Ascending aorta (tissue), 2 donors: ENCODE measurements at regions of chr6 and their contacts with region 1.

Region 1: GRCh38 chr6:33417903-33418689 is at the start of gene CUTA:
- DNase-seq: peak; percentile 99 to 100
- H3K4me3 ChIP-seq: peak within 1 kb of the TSS; percentile 82 to 85
- H3K27ac ChIP-seq: peak within 1 kb of the TSS; percentile 95
- H3K4me1 ChIP-seq: peaks cover 13 to 30% of the 10 kb centered on the region in 2 donors
- H3K27me3 ChIP-seq: no peaks in the 10 kb centered on the region
- CTCF ChIP-seq: peak in 2 of 3 experiments; percentile 22 to 32
- total RNA-seq, gene CUTA: 77.2 TPM

Region 2: DNA sequence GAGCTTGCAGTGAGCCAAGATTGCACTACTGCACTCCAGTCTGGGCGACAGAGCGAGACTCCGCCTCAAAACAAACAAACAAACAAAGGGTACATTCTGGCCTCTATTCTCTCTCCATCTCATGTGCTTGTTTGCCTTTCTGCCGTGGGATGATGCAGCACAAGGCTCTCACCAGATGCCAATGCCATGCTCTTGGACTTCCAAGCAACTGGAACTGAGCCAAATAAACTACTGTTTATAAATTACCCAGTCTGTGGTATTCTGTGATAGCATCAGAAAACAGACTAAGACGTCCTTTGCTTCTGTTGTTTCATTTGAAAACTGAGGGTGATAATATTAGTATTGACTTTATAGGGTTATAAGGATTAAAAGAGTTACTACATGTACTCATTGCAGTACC is 453.3 kb before region 1 on chr6:
- intact Hi-C with region 1: no loop called
- DNase-seq: no peak
- H3K4me3 ChIP-seq: no peak overlapping the region
- H3K27ac ChIP-seq: no peak overlapping the region
- H3K4me1 ChIP-seq: peaks cover 0 to 12% of the 10 kb centered on the region in 2 donors
- H3K27me3 ChIP-seq: no peaks in the 10 kb centered on the region
- CTCF ChIP-seq: no peak

Region 3: DNA sequence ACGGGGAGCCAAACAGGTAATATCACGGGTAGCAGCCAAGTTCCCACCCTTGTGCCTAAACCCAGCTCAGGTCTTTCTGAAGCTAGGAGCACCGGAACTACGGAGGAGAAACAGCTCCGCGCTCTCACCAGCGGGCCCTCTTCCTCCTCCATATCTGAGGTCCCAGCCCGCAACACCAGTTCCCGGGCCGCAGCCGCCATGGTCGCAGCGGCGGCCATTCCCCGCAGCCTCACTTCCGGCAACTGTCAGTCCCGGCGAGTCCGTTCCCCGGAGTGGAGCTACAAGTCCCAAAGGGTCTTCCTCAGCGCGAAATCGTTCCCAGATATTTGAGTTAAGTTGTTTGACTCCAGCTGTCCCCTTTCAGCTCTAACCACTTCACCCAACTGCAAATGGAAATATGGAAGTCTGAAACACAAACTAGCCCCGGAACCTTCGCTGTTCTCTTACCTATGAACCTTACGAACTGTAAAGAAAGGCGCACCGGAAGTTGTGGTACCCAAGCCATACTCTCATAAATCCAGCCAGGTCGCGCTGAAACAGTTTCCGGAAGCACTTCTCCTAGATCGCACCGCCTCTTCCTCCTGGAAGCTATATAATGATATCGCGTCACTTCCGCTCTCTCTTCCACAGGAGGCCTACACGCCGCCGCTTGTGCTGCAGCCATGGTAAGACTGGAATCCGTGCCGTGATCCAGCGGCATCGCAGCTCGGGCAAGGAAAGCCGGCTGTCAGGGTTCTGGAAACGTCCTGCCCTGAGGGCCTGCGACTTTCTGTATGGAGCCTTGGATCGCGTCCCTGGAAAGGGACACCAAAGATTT is 146.4 kb before region 1 on chr6 and contains the starts of genes RPS18 and VPS52:
- intact Hi-C with region 1: loop called (anchors 5 kb)
- DNase-seq: peak; percentile 81 to 98
- H3K4me3 ChIP-seq: peak within 1 kb of the TSS; percentile 71 to 94
- H3K27ac ChIP-seq: peak within 1 kb of the TSS; percentile 91 to 96
- H3K4me1 ChIP-seq: peaks cover 9 to 42% of the 10 kb centered on the region in 2 donors
- H3K27me3 ChIP-seq: no peaks in the 10 kb centered on the region
- CTCF ChIP-seq: no peak
- total RNA-seq, gene RPS18: 1,863 TPM
- total RNA-seq, gene VPS52: 50.1 TPM

Region 4: DNA sequence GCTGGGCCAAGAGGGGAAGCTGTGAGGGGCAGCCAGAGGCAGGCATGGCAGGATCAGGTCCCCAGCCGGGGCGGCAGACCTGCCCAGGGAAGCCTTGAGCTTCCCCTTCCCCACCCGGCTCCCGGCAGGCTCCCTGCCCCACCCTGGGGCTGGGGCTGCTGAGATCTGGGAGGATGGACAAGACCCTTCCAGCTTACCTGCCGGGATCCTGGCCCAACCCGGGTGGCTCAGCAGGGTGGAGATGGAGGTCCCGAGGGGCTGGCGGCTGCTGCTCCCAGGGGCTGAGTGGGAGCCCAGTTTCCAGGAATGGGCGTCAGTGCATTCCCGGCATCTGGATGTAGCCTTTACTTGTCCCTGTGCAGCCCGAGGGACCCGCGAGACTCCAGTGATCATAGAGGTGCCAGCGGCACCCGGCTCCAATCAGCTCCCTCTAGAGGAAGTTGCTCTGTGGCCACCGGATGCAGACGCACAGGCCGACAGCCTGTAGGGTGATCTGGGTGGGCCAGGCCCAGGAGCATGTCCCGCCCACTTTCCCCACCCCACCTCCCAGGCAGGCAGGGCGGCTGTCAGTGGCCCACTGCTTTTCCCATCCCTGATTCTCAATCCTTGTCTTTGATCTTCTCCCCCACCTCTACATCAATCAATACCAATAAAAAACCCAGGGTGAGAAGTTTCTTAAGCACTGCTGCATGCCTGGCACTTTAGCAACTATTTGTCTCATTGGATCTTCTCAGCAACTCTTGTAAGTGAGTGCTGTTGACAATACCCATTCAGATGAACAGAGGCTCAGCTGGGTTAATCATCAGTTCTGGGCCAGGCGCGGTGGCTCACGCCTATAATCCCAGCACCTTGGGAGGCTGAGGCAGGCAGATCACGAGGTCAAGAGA is 162.0 kb after region 1 on chr6 and contains the start of gene BAK1:
- intact Hi-C with region 1: loop called (anchors 10 kb)
- DNase-seq: peak; percentile 66 to 95
- H3K4me3 ChIP-seq: peak within 1 kb of the TSS; percentile 54 to 80
- H3K27ac ChIP-seq: peak within 1 kb of the TSS; percentile 72 to 77
- H3K4me1 ChIP-seq: peaks cover 4 to 14% of the 10 kb centered on the region in 2 donors
- H3K27me3 ChIP-seq: no peaks in the 10 kb centered on the region
- CTCF ChIP-seq: peak; percentile 30 to 57 (median 48)
- total RNA-seq, gene BAK1: 8.7 TPM